ENCODE measurements at regions of chr12 and their contacts with region 1.

Region 1: DNA sequence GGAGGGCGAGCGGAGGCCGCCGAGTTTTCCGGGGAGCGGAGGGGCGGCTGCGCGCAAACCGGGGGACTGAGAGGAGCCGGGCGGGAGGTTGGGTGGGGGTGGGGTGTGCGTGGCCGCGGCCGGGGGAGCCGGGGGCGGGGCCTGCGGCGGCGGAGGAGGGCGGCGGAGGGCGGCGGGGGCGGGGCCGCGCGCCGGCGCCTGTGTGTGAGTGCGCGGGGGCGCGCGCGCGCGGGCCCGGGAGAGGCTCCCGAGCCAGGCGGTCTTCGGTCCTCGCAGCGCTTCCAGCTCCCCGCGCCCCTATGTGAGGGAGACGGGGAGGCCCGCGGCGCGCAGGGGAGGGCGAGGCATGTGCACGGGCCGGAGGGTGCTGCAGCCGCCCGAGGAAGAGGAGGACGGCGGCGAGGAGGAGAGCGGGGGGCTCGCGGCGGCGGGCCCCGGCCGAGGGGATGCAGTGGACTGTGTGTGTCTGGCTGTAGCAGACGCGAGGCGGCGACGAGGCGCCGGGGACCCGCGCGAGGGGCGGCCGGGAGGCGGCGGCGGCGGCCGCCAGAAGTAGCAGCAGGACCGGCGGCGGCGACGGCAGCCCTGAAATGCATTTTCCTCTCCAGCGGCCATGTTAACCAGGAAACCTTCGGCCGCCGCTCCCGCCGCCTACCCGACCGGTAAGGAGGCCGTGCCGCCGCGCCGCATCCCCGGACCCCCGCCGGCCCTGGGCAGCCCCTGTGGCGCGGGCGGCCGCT is at the start of gene DYRK2:
- DNase-seq: peak; percentile 75
- H3K4me3 Mint-ChIP-seq: peak within 1 kb of the TSS; percentile 85
- H3K27ac Mint-ChIP-seq: peak within 1 kb of the TSS; percentile 79
- H3K4me1 Mint-ChIP-seq: peaks cover 45% of the 10 kb centered on the region
- H3K27me3 Mint-ChIP-seq: no peaks in the 10 kb centered on the region
- total RNA-seq, gene DYRK2: 22.8 to 24.2 TPM

Region 2: GRCh38 chr12:67355578-67356379 is 292.9 kb before region 1 on chr12:
- CTCF ChIA-PET with region 1: interaction called, 5 read pairs
- POLR2A ChIA-PET with region 1: no interaction called
- intact Hi-C with region 1: loop called (anchors 5 kb)
- DNase-seq: peak; percentile 11
- H3K4me3 Mint-ChIP-seq: no peak overlapping the region
- H3K27ac Mint-ChIP-seq: no peak overlapping the region
- H3K4me1 Mint-ChIP-seq: peaks cover 35% of the 10 kb centered on the region
- H3K27me3 Mint-ChIP-seq: no peaks in the 10 kb centered on the region

Region 3: DNA sequence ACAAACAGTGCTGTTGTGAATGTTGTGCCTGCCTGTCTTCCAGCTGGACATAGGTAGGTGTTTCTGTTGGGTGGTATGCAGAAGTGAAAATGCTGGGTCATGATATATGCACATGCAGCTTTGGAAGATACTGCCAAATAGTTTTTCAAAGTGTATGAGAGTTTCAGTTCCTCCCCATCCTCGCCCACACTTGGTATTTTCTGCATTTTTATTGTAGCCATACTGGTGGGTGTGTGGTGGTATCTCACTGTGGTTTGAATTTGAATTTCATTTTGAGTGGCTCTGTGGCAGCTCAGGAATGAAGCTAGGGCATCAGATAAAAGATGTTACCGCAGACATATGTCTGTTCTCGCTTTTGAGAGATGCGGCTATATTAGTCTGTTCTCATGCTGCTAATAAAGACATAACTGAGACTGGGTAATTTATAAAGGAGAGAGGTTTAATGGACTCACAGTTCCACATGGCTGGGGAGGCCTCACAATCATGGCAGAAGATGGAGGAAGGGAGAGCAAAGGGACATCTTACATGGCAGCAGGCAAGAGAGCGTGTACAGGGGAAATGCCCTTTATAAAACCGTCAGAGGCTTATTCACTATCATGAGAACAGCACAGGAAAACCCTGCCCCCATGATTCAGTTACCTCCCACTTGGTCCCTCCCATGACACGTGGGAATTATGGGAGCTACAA is 196.4 kb before region 1 on chr12:
- CTCF ChIA-PET with region 1: no interaction called
- POLR2A ChIA-PET with region 1: no interaction called
- intact Hi-C with region 1: loop called (anchors 2 kb)
- DNase-seq: peak; percentile 42
- H3K4me3 Mint-ChIP-seq: peak overlapping the region; percentile 1
- H3K27ac Mint-ChIP-seq: no peak overlapping the region
- H3K4me1 Mint-ChIP-seq: peaks cover 48% of the 10 kb centered on the region
- H3K27me3 Mint-ChIP-seq: peaks cover 4% of the 10 kb centered on the region

Region 4: GRCh38 chr12:67630373-67631088 is 18.2 kb before region 1 on chr12:
- CTCF ChIA-PET with region 1: interaction called, 4 read pairs
- POLR2A ChIA-PET with region 1: no interaction called
- intact Hi-C with region 1: loop called (anchors 1 kb)
- DNase-seq: peak; percentile 92
- H3K4me3 Mint-ChIP-seq: peak overlapping the region; percentile 58
- H3K27ac Mint-ChIP-seq: peak overlapping the region; percentile 81
- H3K4me1 Mint-ChIP-seq: peaks cover 68% of the 10 kb centered on the region
- H3K27me3 Mint-ChIP-seq: peaks cover 2% of the 10 kb centered on the region

Region 5: DNA sequence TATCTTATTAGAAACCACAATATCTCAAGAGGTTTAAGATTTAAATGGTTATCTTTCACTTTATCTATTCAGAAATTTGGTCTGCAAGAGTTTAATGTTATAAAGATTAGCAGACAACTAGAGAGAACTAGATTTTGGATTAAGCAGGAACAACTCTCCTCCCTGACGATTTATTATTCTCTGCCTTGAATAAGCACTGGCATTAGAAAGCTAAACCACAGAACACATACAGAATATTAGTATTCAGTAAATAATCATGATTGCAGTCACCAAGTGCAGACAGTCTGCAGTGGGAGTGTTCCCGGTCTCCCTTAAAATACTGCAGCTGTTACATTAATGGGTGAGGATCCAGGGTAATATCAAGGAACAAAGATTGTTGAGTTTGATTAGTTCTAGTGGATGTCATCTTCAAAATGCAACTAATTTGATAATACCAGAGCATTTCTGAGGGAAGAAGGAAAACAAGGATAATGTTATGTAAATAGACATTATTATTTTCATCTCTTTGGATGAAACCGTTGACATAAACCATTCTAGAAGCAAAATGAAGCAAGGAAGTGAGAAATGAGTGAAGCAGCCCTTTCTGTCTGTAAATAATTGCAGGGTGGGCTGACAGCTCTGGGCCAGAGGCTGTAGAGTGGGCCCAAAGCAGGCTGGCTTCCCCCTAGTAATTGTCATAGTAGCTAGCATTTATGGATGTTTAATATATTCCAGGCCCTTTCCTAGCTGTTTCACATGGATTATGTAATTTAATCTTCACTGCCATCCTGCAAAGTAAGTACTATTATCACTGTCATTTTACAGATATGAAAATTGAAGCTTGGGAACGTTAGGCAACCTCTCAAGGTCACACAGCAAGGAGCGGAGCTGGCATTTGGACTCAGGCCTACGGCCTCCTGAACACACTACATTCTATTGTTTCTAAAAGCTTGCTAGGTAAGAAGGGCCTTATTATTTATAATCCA is 79.3 kb after region 1 on chr12:
- CTCF ChIA-PET with region 1: no interaction called
- POLR2A ChIA-PET with region 1: no interaction called
- intact Hi-C with region 1: no loop called
- DNase-seq: no peak
- H3K4me3 Mint-ChIP-seq: no peak overlapping the region
- H3K27ac Mint-ChIP-seq: no peak overlapping the region
- H3K4me1 Mint-ChIP-seq: no peaks in the 10 kb centered on the region
- H3K27me3 Mint-ChIP-seq: no peaks in the 10 kb centered on the region

Region 6: DNA sequence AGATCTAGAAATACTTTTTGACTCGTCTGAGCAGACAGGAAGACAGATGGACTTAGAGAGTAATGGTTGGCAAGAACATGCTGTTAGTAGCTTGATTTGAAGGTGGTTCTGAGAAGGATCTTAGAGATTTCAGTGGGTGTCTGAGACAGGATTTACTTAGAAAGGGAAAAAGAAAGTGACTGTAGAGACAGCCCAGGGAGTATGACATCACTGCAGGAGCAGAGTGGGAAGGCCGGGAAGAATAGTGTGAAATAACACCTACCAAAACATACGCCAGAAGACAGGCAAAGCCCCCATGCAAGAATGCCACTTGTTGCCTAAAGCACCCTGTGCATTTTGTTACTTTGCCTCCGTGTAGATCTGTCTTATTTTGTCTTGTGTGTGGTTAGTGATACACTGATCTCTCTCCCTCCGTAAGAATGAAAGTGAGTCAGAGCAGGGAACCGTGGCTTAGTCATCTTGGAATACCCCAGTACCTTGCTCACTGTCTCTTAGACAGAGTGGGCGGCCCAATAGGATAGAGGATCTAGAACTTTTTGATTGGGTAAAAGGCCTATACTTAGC is 179.2 kb after region 1 on chr12:
- CTCF ChIA-PET with region 1: no interaction called
- POLR2A ChIA-PET with region 1: interaction called, 3 read pairs
- intact Hi-C with region 1: loop called (anchors 5 kb)
- DNase-seq: peak; percentile 82
- H3K4me3 Mint-ChIP-seq: peak overlapping the region; percentile 70
- H3K27ac Mint-ChIP-seq: peak overlapping the region; percentile 84
- H3K4me1 Mint-ChIP-seq: peaks cover 24% of the 10 kb centered on the region
- H3K27me3 Mint-ChIP-seq: no peaks in the 10 kb centered on the region